ENCODE measurements at regions of chr1 and their contacts with region 1.

Region 1: GRCh38 chr1:226001963-226002666 is 3.0 kb upstream of the SDE2 start:
- DNase-seq: peak in 1 of 2 donors; percentile 91
- H3K4me3 ChIP-seq: no peak overlapping the region
- H3K27ac ChIP-seq: peak overlapping the region; percentile 54
- H3K4me1 ChIP-seq: peaks cover 28% of the 10 kb centered on the region
- H3K27me3 ChIP-seq: no peaks in the 10 kb centered on the region
- CTCF ChIP-seq: no peak
- POLR2A ChIP-seq: no peak

Region 2: DNA sequence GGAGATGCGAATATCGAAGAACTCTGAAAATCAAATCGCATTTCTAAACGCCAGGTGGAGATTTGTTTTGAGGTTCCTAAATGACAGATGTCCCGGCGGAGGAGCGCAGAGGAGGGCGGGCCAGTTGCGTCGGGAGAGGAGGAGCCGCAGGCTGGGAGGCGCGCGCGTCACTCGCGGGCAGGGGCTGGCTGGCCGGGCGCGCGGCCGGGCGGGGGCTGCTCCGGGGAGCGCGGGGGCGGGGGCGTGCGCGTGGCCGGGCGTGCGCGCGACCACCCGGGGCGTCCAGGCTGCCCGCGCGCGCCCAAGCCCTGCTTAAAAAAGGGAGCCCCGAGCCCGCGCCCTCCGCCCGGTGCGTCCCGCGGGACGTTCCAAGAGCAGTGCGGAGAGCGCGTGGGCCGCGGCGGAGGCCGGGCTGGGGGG is 107.7 kb after region 1 on chr1:
- intact Hi-C with region 1: loop called (anchors 5 kb)
- DNase-seq: no peak
- H3K4me3 ChIP-seq: peak overlapping the region; percentile 71 to 80
- H3K27ac ChIP-seq: peak overlapping the region; percentile 95
- H3K4me1 ChIP-seq: peaks cover 20% of the 10 kb centered on the region
- H3K27me3 ChIP-seq: no peaks in the 10 kb centered on the region
- CTCF ChIP-seq: no peak
- POLR2A ChIP-seq: peak in 1 of 2 donors; percentile 9

Measured in vagina (tissue), 2 donors.